Activated T-helper 2 cell treated with anti-CD3 and anti-CD28 coated beads, Interferon-gamma antibody, Interleukin-2, Interleukin-4, amounts not matched to agents 10 μg/mL and 5 μg/mL and 100 μg/mL, durations not matched to agents 14 hours and 24 hours and 36 hours (primary cell): ENCODE measurements at regions of chr2 and their contacts with region 1.

Region 1: DNA sequence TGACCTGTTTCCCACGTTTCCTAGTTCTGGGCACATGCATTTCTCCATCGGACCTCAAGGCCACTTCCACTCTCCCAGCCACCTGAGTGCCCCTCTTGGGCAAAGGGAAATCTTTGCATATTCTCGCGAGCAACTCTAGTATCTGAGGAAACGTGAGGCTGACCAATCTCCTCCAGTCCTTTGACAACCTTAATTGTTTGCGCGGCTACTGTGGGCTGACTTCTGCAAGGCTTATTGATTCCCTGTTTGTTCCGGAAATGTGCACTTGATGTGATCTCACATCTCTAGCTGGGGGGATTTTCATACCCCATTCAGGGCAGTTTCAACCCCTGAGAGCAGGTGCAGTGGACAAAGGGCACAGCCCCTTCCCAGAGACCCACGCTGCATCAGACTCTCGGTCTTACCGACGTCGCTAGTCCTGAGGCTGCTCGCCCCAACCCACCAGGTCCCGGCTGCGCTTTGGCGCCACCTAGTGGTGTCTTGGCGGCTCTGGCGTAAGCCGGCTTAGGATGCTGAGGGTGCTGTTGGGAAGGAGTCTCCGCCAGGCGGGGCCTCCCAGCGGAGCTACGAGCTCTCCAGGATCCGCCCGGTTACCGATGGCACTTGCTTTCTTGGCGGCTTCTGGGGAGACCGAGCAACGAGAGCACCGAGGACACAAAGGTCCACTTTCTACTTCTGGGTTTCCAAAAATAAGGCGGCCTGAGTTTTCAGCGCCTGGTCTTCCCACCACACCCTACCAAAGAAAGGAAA is 24.8 kb upstream of the SPR start:
- DNase-seq: peak; percentile 81
- H3K4me3 Mint-ChIP-seq: peak overlapping the region; percentile 49
- H3K27ac Mint-ChIP-seq: no peak overlapping the region
- H3K4me1 Mint-ChIP-seq: peaks cover 11% of the 10 kb centered on the region
- H3K27me3 Mint-ChIP-seq: peaks cover 35% of the 10 kb centered on the region

Region 2: DNA sequence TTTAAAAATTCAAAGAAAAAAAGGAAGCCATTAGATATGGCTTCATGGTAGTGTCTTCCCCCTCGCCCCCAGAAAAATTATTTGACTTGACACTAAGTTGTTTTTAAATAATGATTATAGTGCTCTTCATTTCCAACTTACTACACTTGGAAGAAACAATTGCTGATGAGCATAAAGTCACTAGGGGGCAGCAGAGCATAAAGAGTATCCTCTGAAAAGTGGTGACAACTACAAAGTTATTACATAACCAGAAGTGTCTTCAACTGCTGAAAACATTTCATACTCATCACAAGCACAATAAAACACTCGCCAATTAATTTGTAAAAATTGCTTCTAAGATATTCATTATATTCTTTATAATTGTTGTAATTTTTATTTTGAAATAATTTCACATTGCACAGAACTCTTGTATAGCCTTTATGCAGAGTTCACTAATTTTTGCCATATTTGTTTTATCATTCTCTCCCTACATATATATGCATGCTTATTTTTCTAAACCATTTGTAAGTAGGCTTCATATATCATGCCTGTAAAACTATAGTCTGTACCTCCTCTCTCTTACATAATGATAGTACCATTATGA is 91.4 kb before region 1 on chr2:
- intact Hi-C with region 1: loop called (anchors 1 kb)
- DNase-seq: peak; percentile 26
- H3K4me3 Mint-ChIP-seq: no peak overlapping the region
- H3K27ac Mint-ChIP-seq: no peak overlapping the region
- H3K4me1 Mint-ChIP-seq: no peaks in the 10 kb centered on the region
- H3K27me3 Mint-ChIP-seq: peaks cover 3% of the 10 kb centered on the region

Region 3: GRCh38 chr2:72781480-72781879 is 80.9 kb before region 1 on chr2:
- intact Hi-C with region 1: no loop called
- DNase-seq: no peak
- H3K4me3 Mint-ChIP-seq: no peak overlapping the region
- H3K27ac Mint-ChIP-seq: no peak overlapping the region
- H3K4me1 Mint-ChIP-seq: peaks cover 2% of the 10 kb centered on the region
- H3K27me3 Mint-ChIP-seq: peaks cover 1% of the 10 kb centered on the region

Region 4: GRCh38 chr2:72825241-72826155 is 36.9 kb before region 1 on chr2 and contains the start of gene EXOC6B:
- intact Hi-C with region 1: loop called (anchors 2 kb)
- DNase-seq: peak; percentile 79
- H3K4me3 Mint-ChIP-seq: peak within 1 kb of the TSS; percentile 89
- H3K27ac Mint-ChIP-seq: peak within 1 kb of the TSS; percentile 54
- H3K4me1 Mint-ChIP-seq: peaks cover 44% of the 10 kb centered on the region
- H3K27me3 Mint-ChIP-seq: peaks cover 2% of the 10 kb centered on the region
- total RNA-seq, gene EXOC6B: 9.3 and 9.4 TPM in 2 replicates

Region 5: DNA sequence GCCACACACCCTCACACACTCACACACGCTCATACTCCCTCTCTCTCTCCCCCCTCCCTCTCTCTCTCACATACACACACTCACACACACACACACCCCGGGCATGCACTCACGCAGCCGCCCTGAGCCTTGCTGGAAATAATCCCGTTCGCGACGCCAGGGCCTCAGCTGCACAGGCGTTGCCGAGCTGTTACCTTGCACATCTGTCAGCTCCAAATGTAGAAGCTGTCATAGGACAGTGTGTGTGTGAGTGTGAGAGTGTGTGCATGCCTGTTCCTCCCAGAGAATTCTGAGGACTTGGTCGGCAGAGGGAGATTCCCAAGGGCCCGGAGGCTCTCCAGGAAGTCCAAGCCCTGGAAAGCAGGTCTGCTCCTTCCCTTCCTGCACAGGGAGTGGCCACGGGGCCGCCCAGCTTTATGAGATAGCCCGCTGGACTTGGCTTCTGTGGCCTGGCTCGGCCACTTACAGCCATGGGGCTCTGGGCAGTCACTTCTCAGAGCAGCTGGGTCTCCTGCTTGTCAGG is 33.4 kb after region 1 on chr2:
- intact Hi-C with region 1: no loop called
- DNase-seq: no peak
- H3K4me3 Mint-ChIP-seq: no peak overlapping the region
- H3K27ac Mint-ChIP-seq: no peak overlapping the region
- H3K4me1 Mint-ChIP-seq: no peaks in the 10 kb centered on the region
- H3K27me3 Mint-ChIP-seq: peaks cover 34% of the 10 kb centered on the region

Region 6: DNA sequence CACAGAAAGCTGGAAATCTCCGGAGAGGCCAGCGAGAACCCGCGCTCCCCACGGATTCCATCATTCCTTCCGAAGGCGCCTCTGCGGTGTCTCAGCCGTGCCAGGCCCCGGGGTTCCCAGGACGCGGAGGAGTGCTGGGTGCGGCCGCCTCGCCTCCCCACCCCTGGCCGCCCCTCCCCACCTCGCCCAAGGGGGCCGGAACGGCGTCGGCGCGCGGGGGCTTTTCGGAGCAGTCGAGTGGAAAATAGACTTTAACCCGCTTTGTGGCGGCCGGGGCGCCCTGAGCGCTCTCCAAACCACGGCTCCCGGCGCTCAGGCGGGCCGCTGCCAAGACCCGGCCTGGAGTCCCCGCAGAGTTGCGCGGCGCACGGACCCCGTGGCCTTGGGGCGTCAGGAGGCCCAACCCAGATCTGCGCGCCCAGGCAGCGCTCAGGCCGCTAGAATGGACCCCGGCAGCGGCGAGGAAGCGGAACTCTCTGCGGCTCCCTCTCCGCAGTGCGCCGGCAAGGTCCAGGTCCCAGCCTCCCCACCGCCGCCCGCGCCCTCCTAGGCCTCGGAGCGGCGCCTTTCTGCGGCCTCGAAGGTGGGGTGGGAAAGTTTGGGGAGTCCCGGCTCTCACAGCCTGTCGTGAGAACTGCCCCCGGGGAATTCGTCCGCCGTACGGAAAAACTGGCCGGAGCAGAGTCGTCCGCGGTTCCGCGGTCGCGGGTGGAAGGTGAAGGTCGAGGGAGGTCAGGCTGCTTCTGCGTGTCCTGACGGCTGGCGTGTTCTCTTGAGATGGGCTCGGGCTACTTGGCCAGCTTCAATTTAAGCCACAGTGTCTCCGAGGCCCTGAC is 53.7 kb after region 1 on chr2:
- intact Hi-C with region 1: loop called (anchors 5 kb)
- DNase-seq: no peak
- H3K4me3 Mint-ChIP-seq: no peak overlapping the region
- H3K27ac Mint-ChIP-seq: no peak overlapping the region
- H3K4me1 Mint-ChIP-seq: peaks cover 8% of the 10 kb centered on the region
- H3K27me3 Mint-ChIP-seq: peaks cover 71% of the 10 kb centered on the region